Mammary epithelial cell (primary cell): ENCODE measurements at regions of chr17 and their contacts with region 1.

Region 1: DNA sequence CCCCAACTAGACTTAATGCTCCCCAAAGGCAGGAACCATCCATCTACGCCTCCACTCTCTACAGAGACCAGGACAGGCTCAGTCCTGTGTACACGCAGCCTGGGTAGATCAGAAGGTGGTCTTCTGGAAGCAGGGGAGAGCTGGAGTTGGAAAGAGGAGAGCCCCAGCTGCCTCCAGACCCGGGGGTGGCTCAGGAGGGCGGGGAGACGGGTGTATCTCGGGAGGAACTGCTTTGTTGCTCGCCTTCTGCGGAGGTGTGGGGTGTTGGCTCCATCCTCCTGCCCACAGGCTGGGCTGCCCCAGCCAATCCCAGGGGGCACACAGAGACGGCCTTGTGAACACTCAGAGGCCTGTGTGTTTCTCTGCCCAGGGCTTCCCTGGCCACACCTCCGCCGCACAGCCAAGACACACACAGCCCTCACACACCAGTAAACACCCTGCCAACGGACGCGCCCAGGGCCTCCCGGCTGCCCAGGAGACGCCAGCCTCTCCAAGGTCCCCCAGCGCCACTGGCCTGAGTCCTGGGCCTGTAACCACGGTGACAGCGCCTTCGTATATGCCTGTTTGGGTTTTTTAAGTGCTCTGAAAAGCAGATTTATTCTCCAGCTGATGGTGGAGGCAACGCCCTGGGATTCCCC is 143.4 kb upstream of the CDC42EP4 start:
- DNase-seq: no peak
- H3K4me3 ChIP-seq: no peak overlapping the region
- H3K27ac ChIP-seq: no peak overlapping the region
- H3K4me1 ChIP-seq: no peaks in the 10 kb centered on the region
- H3K27me3 ChIP-seq: no peaks in the 10 kb centered on the region
- CTCF ChIP-seq: no peak

Region 2: GRCh38 chr17:73474370-73474988 is 19.3 kb after region 1 on chr17:
- CTCF ChIA-PET with region 1: no interaction called
- dilution Hi-C with region 1: no loop called
- in situ Hi-C with region 1: no loop called
- intact Hi-C with region 1: loop called (anchors 1 kb)
- DNase-seq: peak; percentile 75
- H3K4me3 ChIP-seq: no peak overlapping the region
- H3K27ac ChIP-seq: no peak overlapping the region
- H3K4me1 ChIP-seq: peaks cover 8% of the 10 kb centered on the region
- H3K27me3 ChIP-seq: no peaks in the 10 kb centered on the region
- CTCF ChIP-seq: no peak

Region 3: DNA sequence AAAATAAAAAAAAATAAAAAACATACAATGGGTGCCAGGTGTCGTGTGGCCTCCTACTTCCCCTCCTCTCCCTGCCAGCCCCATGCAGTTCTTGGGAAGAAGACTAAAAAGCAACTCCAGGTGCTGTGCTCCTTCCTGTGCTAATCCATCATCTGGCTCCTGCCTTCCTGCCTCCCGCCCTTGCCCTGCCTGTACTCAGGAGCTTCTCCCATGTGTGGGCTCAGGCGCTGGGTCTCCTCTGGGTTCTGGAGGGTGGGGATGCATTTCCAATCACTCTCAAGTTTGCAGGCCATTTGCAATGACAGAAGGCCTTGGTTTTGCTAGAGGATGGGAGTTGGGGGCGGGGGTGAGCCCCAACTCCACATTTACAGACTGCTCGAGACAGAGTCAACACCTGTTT is 66.2 kb after region 1 on chr17:
- CTCF ChIA-PET with region 1: no interaction called
- dilution Hi-C with region 1: loop called (anchors 5 kb)
- in situ Hi-C with region 1: no loop called
- intact Hi-C with region 1: no loop called
- DNase-seq: no peak
- H3K4me3 ChIP-seq: no peak overlapping the region
- H3K27ac ChIP-seq: no peak overlapping the region
- H3K4me1 ChIP-seq: no peaks in the 10 kb centered on the region
- H3K27me3 ChIP-seq: no peaks in the 10 kb centered on the region
- CTCF ChIP-seq: no peak

Region 4: DNA sequence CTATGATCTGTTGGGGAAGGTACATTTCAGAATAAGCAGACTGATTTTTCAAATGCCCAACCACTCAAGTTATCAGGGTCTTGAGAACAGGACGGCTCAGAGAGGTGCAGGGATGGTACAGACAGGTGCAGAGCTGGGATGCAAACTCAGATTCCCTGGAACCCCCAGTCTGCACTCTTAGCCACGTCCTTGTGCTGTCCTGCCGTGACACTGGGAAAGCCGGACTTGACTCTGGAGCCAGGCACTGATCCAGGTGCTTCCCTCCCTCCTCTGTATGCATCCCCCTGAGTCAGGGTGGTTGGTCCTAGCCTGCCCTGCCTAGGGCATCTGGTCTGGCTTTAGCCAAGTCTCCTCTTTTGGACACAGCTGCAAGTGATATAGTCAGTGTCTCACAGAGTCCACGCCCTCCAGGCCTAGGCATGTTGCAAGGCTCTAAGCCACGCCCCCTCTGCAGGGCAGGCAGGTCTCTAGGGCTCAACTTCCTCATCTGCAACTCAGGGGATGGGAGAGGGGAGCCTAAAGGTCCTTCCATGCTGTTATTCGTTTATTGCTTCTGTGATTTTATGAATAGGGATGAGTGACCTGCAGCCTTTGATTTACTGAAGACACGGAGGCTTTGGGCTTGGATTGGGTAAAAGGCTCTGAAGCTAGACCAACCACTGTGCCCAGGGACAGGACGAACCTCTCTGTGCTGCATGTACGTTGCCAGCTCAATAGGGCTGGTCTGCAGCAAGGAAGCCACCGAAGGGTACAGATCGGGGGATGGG is 91.8 kb after region 1 on chr17:
- CTCF ChIA-PET with region 1: no interaction called
- dilution Hi-C with region 1: loop called (anchors 5 kb)
- in situ Hi-C with region 1: no loop called
- intact Hi-C with region 1: no loop called
- DNase-seq: peak; percentile 76
- H3K4me3 ChIP-seq: no peak overlapping the region
- H3K27ac ChIP-seq: no peak overlapping the region
- H3K4me1 ChIP-seq: peaks cover 21% of the 10 kb centered on the region
- H3K27me3 ChIP-seq: no peaks in the 10 kb centered on the region
- CTCF ChIP-seq: no peak